ENCODE measurements at regions of chr7 and their contacts with region 1.

Region 1: DNA sequence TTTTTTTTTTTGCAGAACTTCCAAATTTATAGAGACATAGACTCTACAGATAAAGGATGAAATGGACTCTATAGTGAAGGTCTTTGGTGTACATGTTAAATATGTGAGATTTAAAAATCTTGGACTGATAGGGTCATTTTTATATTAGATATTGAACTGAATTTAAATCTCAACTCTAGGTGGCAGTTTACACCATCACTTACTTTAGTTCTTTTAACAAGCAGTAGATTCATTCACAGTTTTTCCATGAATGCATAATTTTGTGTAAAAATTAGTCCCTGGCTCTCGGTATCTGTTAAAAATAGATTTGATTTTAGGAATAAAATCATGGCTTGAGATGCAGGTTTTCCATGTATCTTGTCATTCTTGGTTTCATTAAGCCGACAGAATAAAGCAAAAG is 31.1 kb upstream of the SNX13 start:
- DNase-seq: peak; percentile 4
- H3K4me3 Mint-ChIP-seq: no peak overlapping the region
- H3K27ac Mint-ChIP-seq: no peak overlapping the region
- H3K4me1 Mint-ChIP-seq: no peaks in the 10 kb centered on the region
- H3K27me3 Mint-ChIP-seq: no peaks in the 10 kb centered on the region
- CTCF ChIP-seq: peak; percentile 30

Region 2: DNA sequence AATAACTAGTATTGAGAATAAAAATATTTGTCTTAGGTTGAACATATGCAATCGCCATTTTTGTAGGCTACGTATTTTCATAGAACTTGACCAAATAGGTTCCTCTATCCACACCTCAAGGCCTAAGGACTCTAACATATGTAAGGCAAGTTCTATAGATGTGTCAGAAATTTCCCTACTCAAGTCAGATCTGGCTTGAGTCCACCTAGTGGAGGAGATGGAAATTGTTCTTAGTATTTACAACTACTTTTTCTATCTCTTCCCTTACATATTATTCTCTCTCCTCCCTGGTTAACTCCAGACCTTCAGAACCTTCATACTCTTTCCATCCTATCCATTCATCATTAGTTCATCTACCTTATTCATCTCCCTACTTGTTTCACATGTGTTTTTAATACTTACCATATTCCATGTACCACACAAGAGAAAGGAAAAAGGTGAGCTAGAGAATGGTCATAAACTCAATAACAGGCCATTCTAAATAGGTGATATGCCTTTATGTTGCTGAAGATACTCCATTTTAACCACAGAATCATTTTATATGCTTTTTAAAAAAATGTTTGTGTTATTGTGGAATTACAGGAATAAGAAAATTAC is 349.7 kb after region 1 on chr7:
- CTCF ChIA-PET with region 1: interaction called, 8 read pairs
- POLR2A ChIA-PET with region 1: interaction called, 5 read pairs
- intact Hi-C with region 1: loop called (anchors 1 kb)
- DNase-seq: peak; percentile 58
- H3K4me3 Mint-ChIP-seq: no peak overlapping the region
- H3K27ac Mint-ChIP-seq: no peak overlapping the region
- H3K4me1 Mint-ChIP-seq: peaks cover 9% of the 10 kb centered on the region
- H3K27me3 Mint-ChIP-seq: no peaks in the 10 kb centered on the region
- CTCF ChIP-seq: peak; percentile 47

Region 3: GRCh38 chr7:18570890-18571478 is 599.6 kb after region 1 on chr7:
- CTCF ChIA-PET with region 1: no interaction called
- POLR2A ChIA-PET with region 1: no interaction called
- intact Hi-C with region 1: loop called (anchors 5 kb)
- DNase-seq: peak; percentile 63
- H3K4me3 Mint-ChIP-seq: no peak overlapping the region
- H3K27ac Mint-ChIP-seq: no peak overlapping the region
- H3K4me1 Mint-ChIP-seq: no peaks in the 10 kb centered on the region
- H3K27me3 Mint-ChIP-seq: no peaks in the 10 kb centered on the region
- CTCF ChIP-seq: peak; percentile 56

Measured in MCF 10A (cell line).